Common myeloid progenitor, CD34-positive (primary cell): ENCODE measurements at regions of chr11 and their contacts with region 1.

Region 1: GRCh38 chr11:66282468-66283386 is 4.8 kb downstream of the CNIH2 start:
- DNase-seq: peak; percentile 98 to 99 (median 99)
- H3K4me3 ChIP-seq: no peak overlapping the region
- H3K27ac ChIP-seq: no peak overlapping the region
- H3K4me1 ChIP-seq: peaks cover 0 to 29% (median 21%) of the 10 kb centered on the region in 4 experiments
- H3K27me3 ChIP-seq: peaks cover 0 to 18% (median 14%) of the 10 kb centered on the region in 5 experiments

Region 2: GRCh38 chr11:66222358-66223149 is 60.2 kb before region 1 on chr11:
- CTCF ChIA-PET with region 1: interaction called, 100 read pairs
- POLR2A ChIA-PET with region 1: no interaction called
- DNase-seq: peak; percentile 91 to 98 (median 96)
- H3K4me3 ChIP-seq: no peak overlapping the region
- H3K27ac ChIP-seq: peak overlapping the region; percentile 63 to 64
- H3K4me1 ChIP-seq: peaks cover 0 to 8% (median 2%) of the 10 kb centered on the region in 4 experiments
- H3K27me3 ChIP-seq: no peaks in the 10 kb centered on the region

Region 3: DNA sequence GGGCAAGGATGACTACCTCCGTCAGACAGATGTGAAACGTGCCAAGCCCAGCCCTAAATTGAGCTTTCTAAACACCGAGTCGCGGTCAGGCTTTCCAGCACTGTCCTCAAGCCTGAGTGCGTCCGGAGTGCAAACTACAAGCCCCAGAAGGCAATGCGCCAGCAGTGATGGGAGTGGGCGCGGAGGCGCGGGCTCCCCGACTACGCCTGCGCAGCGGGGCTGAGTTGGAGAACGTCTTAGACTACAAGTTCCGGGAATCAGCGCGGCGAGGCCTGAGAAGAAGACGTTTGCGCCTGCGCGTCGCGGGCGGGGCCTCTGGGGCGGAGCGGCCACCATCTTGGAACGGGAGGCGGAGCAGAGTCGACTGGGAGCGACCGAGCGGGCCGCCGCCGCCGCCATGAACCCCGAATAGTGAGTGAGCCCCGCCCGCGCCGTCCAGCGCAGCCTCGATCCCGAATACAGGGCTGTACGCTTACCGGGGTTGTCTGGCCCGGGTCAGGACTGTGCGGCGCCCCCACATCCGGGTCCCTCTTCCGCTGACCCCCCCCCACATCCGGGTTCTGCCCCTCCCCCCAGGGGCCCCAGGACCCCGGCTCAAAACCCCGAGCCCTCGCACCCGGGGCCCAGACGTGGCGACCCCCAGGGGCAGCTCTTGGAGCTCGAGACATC is 14.3 kb before region 1 on chr11 and contains the start of gene RAB1B:
- CTCF ChIA-PET with region 1: interaction called, 36 read pairs
- POLR2A ChIA-PET with region 1: interaction called, 6 read pairs
- DNase-seq: peak; percentile 99
- H3K4me3 ChIP-seq: peak within 1 kb of the TSS; percentile 74 to 96 (median 89)
- H3K27ac ChIP-seq: peak within 1 kb of the TSS; percentile 64 to 88
- H3K4me1 ChIP-seq: peaks cover 5 to 29% (median 26%) of the 10 kb centered on the region in 4 experiments
- H3K27me3 ChIP-seq: no peaks in the 10 kb centered on the region

Region 4: GRCh38 chr11:66344550-66345315 is 62.0 kb after region 1 on chr11 and contains the start of gene BRMS1:
- CTCF ChIA-PET with region 1: no interaction called
- POLR2A ChIA-PET with region 1: no interaction called
- DNase-seq: peak; percentile 97 to 98 (median 98)
- H3K4me3 ChIP-seq: peak within 1 kb of the TSS; percentile 46 to 99 (median 91)
- H3K27ac ChIP-seq: peak within 1 kb of the TSS; percentile 87 to 91
- H3K4me1 ChIP-seq: peaks cover 6 to 41% (median 32%) of the 10 kb centered on the region in 4 experiments
- H3K27me3 ChIP-seq: no peaks in the 10 kb centered on the region